Transverse colon (tissue), 4 donors: ENCODE measurements at regions of chr10 and their contacts with region 1.

Region 1: DNA sequence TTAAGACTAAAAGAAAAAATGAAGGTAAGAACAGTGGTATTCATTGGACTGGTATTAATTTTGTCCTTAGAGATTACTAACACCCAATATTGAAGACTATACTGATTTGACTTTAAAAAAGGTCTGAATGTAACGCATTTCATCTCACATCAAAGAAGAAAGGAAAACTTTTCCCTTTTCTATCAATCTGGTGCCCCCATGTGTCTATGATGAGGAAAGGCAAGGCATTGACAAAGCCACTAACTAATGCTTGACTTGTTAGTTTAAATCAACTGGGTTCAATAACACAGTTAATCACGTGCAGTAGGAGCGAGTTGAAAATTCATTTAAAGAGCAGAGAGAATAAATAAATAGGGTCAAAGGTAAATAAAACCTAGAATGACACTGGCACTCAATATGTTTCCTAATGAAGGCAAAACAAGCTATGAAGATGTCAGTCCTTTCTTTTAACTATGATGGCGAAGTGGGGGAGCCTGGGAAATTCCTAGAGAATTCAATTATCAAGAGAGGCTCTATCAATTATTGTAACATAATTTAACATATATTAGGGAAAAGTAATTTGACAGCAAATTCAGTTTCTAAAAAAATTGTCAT is 180.9 kb downstream of the ANK3 start:
- DNase-seq: no peak
- H3K4me3 ChIP-seq: no peak overlapping the region
- H3K27ac ChIP-seq: no peak overlapping the region
- H3K4me1 ChIP-seq: peaks cover 0 to 9% (median 2%) of the 10 kb centered on the region in 4 donors
- H3K27me3 ChIP-seq: no peaks in the 10 kb centered on the region
- CTCF ChIP-seq: peak; percentile 71 to 74 (median 74)
- EP300 ChIP-seq: no peak
- POLR2A ChIP-seq: no peak

Region 2: DNA sequence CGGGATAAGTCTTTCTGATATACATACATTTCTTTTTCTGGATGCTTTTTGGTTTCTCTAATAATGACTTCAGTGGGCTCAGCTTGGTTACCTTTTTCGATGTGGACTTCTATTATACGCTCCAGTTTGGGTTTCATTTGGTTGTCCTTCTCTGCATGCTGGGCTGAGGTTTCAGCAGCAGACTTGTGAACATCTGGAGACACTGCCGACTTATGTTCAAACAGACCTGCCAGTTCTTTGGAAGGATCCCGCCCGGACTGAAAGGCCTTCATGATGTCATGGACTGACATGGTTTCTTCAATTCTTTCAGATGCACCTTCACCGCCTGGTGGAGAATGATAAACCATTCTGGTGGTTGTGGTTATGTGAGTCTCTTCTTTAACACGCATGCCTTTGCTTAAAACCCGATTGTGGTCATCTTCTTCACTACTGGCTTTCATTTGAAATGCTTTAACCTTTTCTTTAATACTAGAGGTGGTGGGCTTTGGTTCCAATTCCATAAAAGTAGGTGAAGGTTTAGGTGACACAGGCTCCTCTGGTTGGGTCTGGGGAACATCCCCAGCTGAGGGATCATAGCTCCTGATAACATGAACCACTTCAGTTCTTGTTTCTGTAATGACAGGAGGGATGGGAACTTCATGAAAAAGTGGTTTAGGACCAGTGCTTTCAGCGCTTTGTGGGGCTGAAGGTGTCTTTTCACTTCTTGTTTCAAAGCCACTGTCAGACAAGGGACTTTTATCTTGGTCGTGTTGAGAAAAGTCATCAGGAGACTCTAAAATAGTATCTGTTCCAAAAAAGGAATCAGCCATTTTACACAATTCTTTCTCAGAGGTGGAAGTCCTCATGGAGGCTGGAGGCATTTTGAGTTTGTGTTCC is 134.8 kb before region 1 on chr10:
- in situ Hi-C with region 1: no loop called
- intact Hi-C with region 1: no loop called
- DNase-seq: no peak
- H3K4me3 ChIP-seq: no peak overlapping the region
- H3K27ac ChIP-seq: no peak overlapping the region
- H3K4me1 ChIP-seq: no peaks in the 10 kb centered on the region
- H3K27me3 ChIP-seq: no peaks in the 10 kb centered on the region
- CTCF ChIP-seq: no peak
- EP300 ChIP-seq: no peak
- POLR2A ChIP-seq: no peak

Region 3: GRCh38 chr10:60099998-60100747 is 108.6 kb before region 1 on chr10:
- in situ Hi-C with region 1: loop called in 3 of 4 experiments (anchors 10 to 25 kb)
- intact Hi-C with region 1: loop called (anchors 5 kb)
- DNase-seq: no peak
- H3K4me3 ChIP-seq: no peak overlapping the region
- H3K27ac ChIP-seq: no peak overlapping the region
- H3K4me1 ChIP-seq: peaks cover 0 to 11% (median 0%) of the 10 kb centered on the region in 4 donors
- H3K27me3 ChIP-seq: no peaks in the 10 kb centered on the region
- CTCF ChIP-seq: peak; percentile 48 to 59 (median 57)
- EP300 ChIP-seq: no peak
- POLR2A ChIP-seq: no peak

Region 4: GRCh38 chr10:60114765-60115586 is 93.8 kb before region 1 on chr10:
- in situ Hi-C with region 1: loop called in 3 of 4 experiments (anchors 10 to 25 kb)
- intact Hi-C with region 1: loop called (anchors 5 kb)
- DNase-seq: no peak
- H3K4me3 ChIP-seq: no peak overlapping the region
- H3K27ac ChIP-seq: no peak overlapping the region
- H3K4me1 ChIP-seq: peaks cover 0 to 11% (median 4%) of the 10 kb centered on the region in 4 donors
- H3K27me3 ChIP-seq: no peaks in the 10 kb centered on the region
- CTCF ChIP-seq: peak; percentile 52 to 60 (median 58)
- EP300 ChIP-seq: no peak
- POLR2A ChIP-seq: no peak

Region 5: DNA sequence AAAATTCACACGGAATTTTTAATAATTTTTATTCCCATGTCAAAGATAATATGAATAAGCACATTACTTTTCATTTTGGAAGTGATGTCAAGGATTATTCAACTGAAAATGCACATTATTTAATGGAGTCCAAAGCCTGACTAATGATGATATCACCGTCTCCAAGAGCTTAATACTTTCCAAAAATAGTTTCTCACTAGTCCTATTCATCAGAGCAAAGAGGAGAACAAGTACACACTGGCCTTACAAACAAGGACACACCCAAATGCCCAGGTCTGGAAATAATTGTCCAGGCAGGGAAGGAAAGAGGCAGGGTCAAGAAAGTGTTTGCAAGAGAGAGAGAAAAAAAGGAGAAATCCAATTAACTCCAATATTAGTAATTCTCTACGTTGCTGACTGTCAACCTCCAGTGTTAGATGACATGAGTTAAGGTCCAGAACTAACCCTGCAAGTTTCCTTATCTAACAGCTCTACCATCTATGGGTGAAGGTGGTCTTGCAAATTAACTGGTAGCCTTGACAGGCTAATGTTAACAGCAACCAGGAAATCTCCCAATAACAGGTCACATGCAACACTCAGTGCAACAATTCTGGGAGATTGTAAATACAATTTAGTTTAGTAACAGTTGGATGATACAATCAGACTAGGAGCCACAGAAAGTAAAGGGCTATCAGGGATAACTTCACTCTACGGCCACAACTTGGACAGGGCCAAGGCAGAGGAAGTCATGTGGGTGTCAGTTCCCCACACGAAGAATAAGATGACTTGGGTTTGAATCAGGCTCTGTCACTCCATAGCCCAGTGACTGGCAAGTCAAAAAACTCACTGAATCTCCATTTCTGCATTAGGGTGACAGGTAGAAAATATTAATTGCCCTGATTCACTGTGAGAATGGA is 85.4 kb before region 1 on chr10:
- in situ Hi-C with region 1: loop called in 3 of 4 experiments (anchors 10 to 25 kb)
- intact Hi-C with region 1: loop called (anchors 5 kb)
- DNase-seq: no peak
- H3K4me3 ChIP-seq: no peak overlapping the region
- H3K27ac ChIP-seq: peak overlapping the region in 1 of 4 donors; percentile 48
- H3K4me1 ChIP-seq: peaks cover 0 to 11% (median 0%) of the 10 kb centered on the region in 4 donors
- H3K27me3 ChIP-seq: no peaks in the 10 kb centered on the region
- CTCF ChIP-seq: no peak
- EP300 ChIP-seq: no peak
- POLR2A ChIP-seq: no peak

Region 6: GRCh38 chr10:60246382-60246781 is 37.6 kb after region 1 on chr10:
- in situ Hi-C with region 1: no loop called
- intact Hi-C with region 1: no loop called
- DNase-seq: no peak
- H3K4me3 ChIP-seq: no peak overlapping the region
- H3K27ac ChIP-seq: no peak overlapping the region
- H3K4me1 ChIP-seq: no peaks in the 10 kb centered on the region
- H3K27me3 ChIP-seq: no peaks in the 10 kb centered on the region
- CTCF ChIP-seq: no peak
- EP300 ChIP-seq: no peak
- POLR2A ChIP-seq: no peak

Region 7: GRCh38 chr10:60434418-60435046 is 225.8 kb after region 1 on chr10:
- in situ Hi-C with region 1: loop called in 3 of 4 experiments (anchors 10 to 25 kb)
- intact Hi-C with region 1: no loop called
- DNase-seq: peak; percentile 28
- H3K4me3 ChIP-seq: no peak overlapping the region
- H3K27ac ChIP-seq: no peak overlapping the region
- H3K4me1 ChIP-seq: peaks cover 7 to 14% (median 10%) of the 10 kb centered on the region in 4 donors
- H3K27me3 ChIP-seq: no peaks in the 10 kb centered on the region
- CTCF ChIP-seq: peak; percentile 60 to 77 (median 64)
- EP300 ChIP-seq: no peak
- POLR2A ChIP-seq: no peak